Activated CD8-positive, alpha-beta T cell treated with anti-CD3 and anti-CD28 coated beads for 36 hours (primary cell): ENCODE measurements at regions of chr20 and their contacts with region 1.

Region 1: DNA sequence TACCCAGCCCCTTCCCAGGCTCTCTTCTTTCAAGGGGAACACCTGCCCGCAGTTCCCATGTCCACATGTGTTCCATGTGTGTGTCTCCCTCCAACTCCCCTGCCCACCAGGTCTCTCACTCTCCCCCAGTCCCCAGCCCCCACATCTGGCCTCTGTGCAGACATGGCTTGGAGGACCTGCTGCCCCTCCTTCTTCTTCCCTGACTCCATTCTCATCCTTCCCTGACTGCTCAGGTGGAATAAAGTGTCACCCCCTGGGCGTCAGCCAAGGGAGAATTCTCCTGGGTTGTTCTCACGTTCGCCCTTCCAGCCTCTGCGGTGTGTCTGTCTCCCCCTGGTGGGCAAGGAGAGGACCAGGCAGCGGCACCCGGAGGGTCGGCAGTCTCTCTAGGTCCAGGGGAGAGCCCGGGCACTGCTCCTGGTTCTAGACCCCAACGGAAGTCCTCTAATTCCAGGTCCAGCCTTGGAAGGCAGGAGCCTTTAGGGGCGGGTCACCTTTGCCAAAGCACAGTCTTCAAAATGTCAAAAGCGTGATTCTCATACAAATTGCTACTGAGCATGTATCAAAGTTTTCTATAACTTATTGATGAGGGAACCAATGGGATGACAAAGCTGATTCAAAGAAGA is 50.5 kb downstream of the EBF4 start:
- DNase-seq: peak; percentile 77
- ATAC-seq: peak; percentile 77
- H3K4me3 Mint-ChIP-seq: no peak overlapping the region
- H3K27ac Mint-ChIP-seq: peak overlapping the region; percentile 80
- H3K4me1 Mint-ChIP-seq: peaks cover 43% of the 10 kb centered on the region
- H3K27me3 Mint-ChIP-seq: no peaks in the 10 kb centered on the region
- CTCF ChIP-seq: peak; percentile 92

Region 2: DNA sequence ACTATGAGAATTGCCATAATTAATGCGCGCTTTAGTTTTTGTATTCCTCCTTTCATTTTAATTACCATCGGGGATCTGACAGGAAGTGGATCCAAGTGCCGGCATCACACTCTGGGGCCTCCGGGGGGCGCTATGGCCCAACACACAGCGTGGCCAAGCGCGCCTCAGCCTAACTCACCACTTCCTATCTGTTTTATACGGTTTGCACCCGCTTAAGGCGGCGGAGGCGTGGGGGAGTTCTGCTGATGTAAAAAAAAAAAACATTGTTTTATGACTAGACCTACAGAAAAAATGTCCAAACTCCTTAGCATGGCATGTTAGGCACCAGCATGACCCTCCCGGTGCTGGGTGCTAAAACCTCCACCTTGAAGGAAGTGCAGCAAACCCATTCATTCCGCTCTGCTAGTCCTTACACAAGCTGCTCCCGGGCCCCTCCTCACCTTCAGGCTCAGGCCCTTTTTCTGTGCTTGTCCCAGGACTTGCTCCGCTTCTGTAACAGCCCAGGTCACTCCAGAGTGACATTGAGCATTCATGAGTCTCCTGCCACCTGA is 54.9 kb before region 1 on chr20:
- CTCF ChIA-PET with region 1: interaction called, 110 read pairs
- POLR2A ChIA-PET with region 1: interaction called, 6 read pairs
- intact Hi-C with region 1: loop called (anchors 2 kb)
- DNase-seq: peak; percentile 94
- ATAC-seq: peak; percentile 95
- H3K4me3 Mint-ChIP-seq: no peak overlapping the region
- H3K27ac Mint-ChIP-seq: no peak overlapping the region
- H3K4me1 Mint-ChIP-seq: peaks cover 22% of the 10 kb centered on the region
- H3K27me3 Mint-ChIP-seq: peaks cover 31% of the 10 kb centered on the region
- CTCF ChIP-seq: peak; percentile 94

Region 3: GRCh38 chr20:2708073-2708415 is 35.0 kb before region 1 on chr20:
- CTCF ChIA-PET with region 1: interaction called, 77 read pairs
- POLR2A ChIA-PET with region 1: no interaction called
- intact Hi-C with region 1: loop called (anchors 2 kb)
- DNase-seq: no peak
- ATAC-seq: no peak
- H3K4me3 Mint-ChIP-seq: no peak overlapping the region
- H3K27ac Mint-ChIP-seq: no peak overlapping the region
- H3K4me1 Mint-ChIP-seq: peaks cover 3% of the 10 kb centered on the region
- H3K27me3 Mint-ChIP-seq: no peaks in the 10 kb centered on the region
- CTCF ChIP-seq: no peak

Region 4: GRCh38 chr20:2713285-2713684 is 29.8 kb before region 1 on chr20:
- CTCF ChIA-PET with region 1: interaction called, 77 read pairs
- POLR2A ChIA-PET with region 1: interaction called, 3 read pairs
- intact Hi-C with region 1: loop called (anchors 2 kb)
- DNase-seq: no peak
- ATAC-seq: peak; percentile 80
- H3K4me3 Mint-ChIP-seq: no peak overlapping the region
- H3K27ac Mint-ChIP-seq: no peak overlapping the region
- H3K4me1 Mint-ChIP-seq: no peaks in the 10 kb centered on the region
- H3K27me3 Mint-ChIP-seq: no peaks in the 10 kb centered on the region
- CTCF ChIP-seq: peak; percentile 36

Region 5: GRCh38 chr20:2729251-2729713 is 13.8 kb before region 1 on chr20:
- CTCF ChIA-PET with region 1: interaction called, 35 read pairs
- POLR2A ChIA-PET with region 1: interaction called, 18 read pairs
- intact Hi-C with region 1: no loop called
- DNase-seq: peak; percentile 48
- ATAC-seq: peak; percentile 96
- H3K4me3 Mint-ChIP-seq: peak overlapping the region; percentile 33
- H3K27ac Mint-ChIP-seq: peak overlapping the region; percentile 85
- H3K4me1 Mint-ChIP-seq: peaks cover 19% of the 10 kb centered on the region
- H3K27me3 Mint-ChIP-seq: no peaks in the 10 kb centered on the region
- CTCF ChIP-seq: no peak

Region 6: DNA sequence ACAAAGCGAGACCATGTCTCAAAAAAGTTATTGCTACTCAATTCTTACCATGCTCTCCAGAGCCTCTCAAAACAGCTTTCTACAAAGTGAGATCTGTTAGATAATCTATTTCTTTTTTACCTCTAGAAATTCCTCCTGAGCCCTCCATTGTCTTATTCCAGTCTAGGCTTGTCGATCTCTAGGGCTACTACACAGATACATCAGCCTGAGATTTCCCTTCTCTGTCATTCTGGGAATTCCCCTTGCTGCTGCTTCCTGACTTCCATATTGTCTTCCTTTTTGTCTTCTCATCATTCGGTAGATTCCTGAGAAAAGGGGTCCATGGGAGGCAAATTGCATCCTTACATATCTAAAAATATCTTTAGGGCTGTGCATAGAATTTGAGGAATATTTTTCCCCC is 224.8 kb after region 1 on chr20:
- CTCF ChIA-PET with region 1: no interaction called
- POLR2A ChIA-PET with region 1: no interaction called
- intact Hi-C with region 1: no loop called
- DNase-seq: no peak
- ATAC-seq: no peak
- H3K4me3 Mint-ChIP-seq: no peak overlapping the region
- H3K27ac Mint-ChIP-seq: no peak overlapping the region
- H3K4me1 Mint-ChIP-seq: no peaks in the 10 kb centered on the region
- H3K27me3 Mint-ChIP-seq: no peaks in the 10 kb centered on the region
- CTCF ChIP-seq: no peak